ENCODE measurements at regions of chr16 and their contacts with region 1.

Region 1: GRCh38 chr16:3525951-3526350 is 25.1 kb downstream of the CLUAP1 start:
- DNase-seq: no peak
- H3K4me3 ChIP-seq: no peak overlapping the region
- CTCF ChIP-seq: no peak

Region 2: GRCh38 chr16:3536271-3536731 is 10.3 kb after region 1 on chr16:
- CTCF ChIA-PET with region 1: interaction called, 20 read pairs
- POLR2A ChIA-PET with region 1: no interaction called
- DNase-seq: peak; percentile 76
- H3K4me3 ChIP-seq: no peak overlapping the region
- CTCF ChIP-seq: no peak

Region 3: DNA sequence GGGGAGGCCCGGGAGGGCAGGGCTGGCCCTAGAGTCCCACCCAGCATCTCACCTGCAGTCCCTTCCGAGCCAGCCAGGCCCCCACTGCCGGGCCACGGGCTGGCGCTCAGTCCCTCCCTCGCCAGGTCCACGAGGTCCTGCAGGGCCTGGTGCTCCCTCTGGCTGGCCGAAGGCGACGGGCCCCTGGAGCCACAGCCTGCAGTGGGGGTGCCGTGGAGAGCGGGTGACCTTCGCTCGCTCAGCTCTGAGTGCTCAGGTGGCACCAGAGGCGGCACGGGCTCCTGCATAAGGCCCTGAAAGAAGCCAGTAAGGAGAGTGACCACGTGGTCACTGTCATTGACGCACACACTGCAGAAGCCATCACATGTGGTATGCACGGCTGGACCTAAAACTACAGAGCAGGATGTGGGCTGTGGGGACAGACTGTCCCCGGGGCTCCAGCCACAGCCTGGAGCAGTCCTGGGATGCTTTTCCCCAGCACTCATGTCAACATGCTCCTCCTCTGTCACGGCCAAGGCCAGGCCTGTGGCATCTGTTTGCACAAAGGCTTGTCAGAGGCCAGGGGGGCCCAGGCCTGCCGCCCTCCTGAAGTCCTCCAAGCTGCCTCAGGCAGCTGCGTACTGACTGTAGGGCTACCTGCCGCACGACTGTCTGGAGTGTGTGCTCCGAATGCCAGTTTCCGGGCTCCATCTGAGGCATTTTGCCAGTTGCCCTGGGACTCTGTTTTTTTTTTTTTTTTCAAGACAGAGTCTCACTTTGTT is 70.3 kb after region 1 on chr16:
- CTCF ChIA-PET with region 1: no interaction called
- POLR2A ChIA-PET with region 1: no interaction called
- DNase-seq: no peak
- H3K4me3 ChIP-seq: no peak overlapping the region
- CTCF ChIP-seq: no peak

Measured in AG04449 (cell line).